ENCODE measurements at regions of chr7 and their contacts with region 1.

Region 1: GRCh38 chr7:128209229-128210035 is 31.6 kb upstream of the LEP start:
- DNase-seq: peak; percentile 60 to 88 (median 71)
- H3K4me3 ChIP-seq: no peak overlapping the region
- H3K27ac ChIP-seq: no peak overlapping the region
- H3K4me1 ChIP-seq: peaks cover 0 to 8% of the 10 kb centered on the region in 2 donors
- H3K27me3 ChIP-seq: peaks cover 10% of the 10 kb centered on the region
- CTCF ChIP-seq: peak; percentile 95 to 99 (median 98)
- POLR2A ChIP-seq: no peak

Region 2: DNA sequence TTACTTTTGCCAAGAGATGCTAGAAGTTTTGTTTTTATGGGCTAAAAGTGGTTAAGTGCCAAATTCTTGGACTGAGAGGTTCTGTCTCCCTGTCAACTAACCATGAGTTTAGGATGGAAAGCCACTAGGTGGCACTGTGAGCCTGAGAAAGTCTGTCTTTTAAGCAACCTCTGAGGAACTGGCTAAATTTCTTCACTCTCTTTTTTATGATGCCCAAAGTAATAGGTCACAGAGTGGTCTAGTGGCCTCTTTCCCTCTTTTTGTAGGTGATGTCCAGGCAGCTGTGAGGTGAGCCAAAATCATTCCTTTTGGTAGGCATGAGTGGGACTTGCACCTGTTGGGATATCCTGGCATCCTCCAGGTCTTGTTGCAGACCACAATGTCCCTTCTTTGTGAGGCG is 500.6 kb before region 1 on chr7:
- intact Hi-C with region 1: loop called (anchors 2 to 5 kb)
- DNase-seq: peak; percentile 75 to 94 (median 85)
- H3K4me3 ChIP-seq: no peak overlapping the region
- H3K27ac ChIP-seq: no peak overlapping the region
- H3K4me1 ChIP-seq: no peaks in the 10 kb centered on the region
- H3K27me3 ChIP-seq: no peaks in the 10 kb centered on the region
- CTCF ChIP-seq: peak; percentile 74 to 88 (median 80)
- POLR2A ChIP-seq: no peak

Region 3: DNA sequence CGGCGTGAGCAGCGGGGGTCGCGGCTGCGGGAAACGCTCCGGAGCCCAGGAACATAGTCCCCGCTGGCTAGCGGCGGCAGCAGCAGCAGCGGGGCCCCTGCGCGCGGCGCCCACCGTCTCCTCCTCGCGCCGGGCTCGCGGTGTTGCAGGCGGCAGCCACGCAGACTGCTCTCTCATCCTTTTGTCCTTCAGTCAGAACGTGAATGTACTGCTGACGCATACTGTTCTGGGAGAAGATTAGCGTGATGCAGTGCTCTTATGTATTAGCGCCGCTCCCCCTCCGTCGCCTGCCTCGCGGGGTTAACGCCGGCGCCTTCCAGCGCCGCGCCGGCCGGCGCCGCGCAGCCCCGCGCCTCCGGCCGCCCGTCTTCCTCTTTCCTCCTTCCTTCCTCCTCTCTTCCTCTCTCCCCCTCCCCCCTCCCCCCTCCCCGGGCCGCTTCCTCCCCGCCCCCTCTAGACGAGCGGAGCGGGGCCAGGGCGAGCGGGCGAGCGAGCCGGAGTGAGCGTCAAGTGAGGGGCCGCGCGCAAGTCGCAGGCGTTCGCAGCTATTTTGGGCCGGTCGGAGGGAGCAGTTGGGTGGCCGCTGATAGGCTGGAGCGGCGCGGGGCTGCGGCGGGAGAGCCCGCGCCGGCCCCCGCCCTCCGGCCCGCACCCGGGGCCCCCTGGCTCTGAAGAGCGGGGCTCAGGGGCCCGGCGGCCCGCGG is 177.4 kb before region 1 on chr7:
- intact Hi-C with region 1: loop called in 1 of 2 experiments (anchors 5 kb)
- DNase-seq: peak; percentile 73 to 84 (median 81)
- H3K4me3 ChIP-seq: peak overlapping the region in 2 of 4 donors; percentile 59 to 72
- H3K27ac ChIP-seq: peak overlapping the region in 3 of 5 donors; percentile 72 to 79 (median 76)
- H3K4me1 ChIP-seq: peaks cover 9 to 46% of the 10 kb centered on the region in 2 donors
- H3K27me3 ChIP-seq: no peaks in the 10 kb centered on the region
- CTCF ChIP-seq: peak in 4 of 6 experiments; percentile 16 to 52 (median 28)
- POLR2A ChIP-seq: peak; percentile 71 to 91

Region 4: GRCh38 chr7:128041203-128041602 is 168.2 kb before region 1 on chr7:
- intact Hi-C with region 1: loop called (anchors 5 kb)
- DNase-seq: peak in 6 of 7 donors; percentile 40 to 73 (median 66)
- H3K4me3 ChIP-seq: no peak overlapping the region
- H3K27ac ChIP-seq: no peak overlapping the region
- H3K4me1 ChIP-seq: peaks cover 6 to 7% of the 10 kb centered on the region in 2 donors
- H3K27me3 ChIP-seq: no peaks in the 10 kb centered on the region
- CTCF ChIP-seq: no peak
- POLR2A ChIP-seq: no peak

Region 5: DNA sequence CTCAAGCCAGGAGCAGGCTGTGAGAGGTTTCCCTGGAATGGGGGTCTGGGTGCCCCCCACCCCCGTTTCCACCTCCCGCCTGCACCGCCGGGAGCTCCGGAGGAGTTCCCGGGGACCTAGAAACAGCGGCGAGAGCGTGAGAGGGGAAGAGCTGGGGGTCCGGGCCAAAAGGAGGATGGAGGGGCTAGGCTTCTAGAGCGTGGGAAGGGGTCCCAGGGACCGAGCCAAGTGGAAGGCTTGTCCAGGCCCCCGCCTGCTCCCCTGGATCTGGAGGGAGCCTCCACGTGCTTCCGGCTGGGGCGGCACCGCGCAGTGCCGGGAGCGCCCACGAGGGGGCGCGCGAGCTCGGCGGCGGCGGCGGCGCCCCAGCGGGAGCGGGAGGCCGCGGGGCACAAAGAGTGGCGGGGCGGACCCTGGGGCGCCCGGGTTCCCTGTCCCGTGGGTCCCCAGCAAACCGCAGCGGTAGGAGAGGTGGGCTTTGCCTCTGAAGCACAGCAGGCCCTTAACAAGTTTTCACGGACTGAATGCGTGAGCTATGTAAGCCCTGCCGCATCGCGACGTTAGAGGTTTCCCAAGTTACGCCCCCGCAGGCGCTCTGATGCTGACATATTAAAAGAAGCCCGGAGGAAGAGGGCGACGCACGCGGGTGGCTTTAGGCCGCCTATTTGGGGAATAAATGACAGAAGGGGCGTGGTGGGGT is 73.8 kb before region 1 on chr7:
- intact Hi-C with region 1: loop called (anchors 2 kb)
- DNase-seq: peak; percentile 25 to 76 (median 56)
- H3K4me3 ChIP-seq: peak overlapping the region in 2 of 4 donors; percentile 25 to 71
- H3K27ac ChIP-seq: no peak overlapping the region
- H3K4me1 ChIP-seq: peaks cover 6 to 12% of the 10 kb centered on the region in 2 donors
- H3K27me3 ChIP-seq: peaks cover 20% of the 10 kb centered on the region
- CTCF ChIP-seq: peak in 5 of 6 experiments; percentile 18 to 99 (median 86)
- POLR2A ChIP-seq: no peak

Measured in adrenal gland (tissue), 19 donors.